Mammary epithelial cell (primary cell): ENCODE measurements at regions of chr7 and their contacts with region 1.

Region 1: GRCh38 chr7:37031571-37032257 is 307.4 kb upstream of the AOAH start:
- DNase-seq: peak; percentile 97
- H3K4me3 ChIP-seq: no peak overlapping the region
- H3K27ac ChIP-seq: peak overlapping the region; percentile 66
- H3K4me1 ChIP-seq: peaks cover 23% of the 10 kb centered on the region
- H3K27me3 ChIP-seq: no peaks in the 10 kb centered on the region
- CTCF ChIP-seq: no peak

Region 2: GRCh38 chr7:37097276-37097675 is 65.6 kb after region 1 on chr7:
- CTCF ChIA-PET with region 1: no interaction called
- dilution Hi-C with region 1: no loop called
- in situ Hi-C with region 1: no loop called
- intact Hi-C with region 1: loop called (anchors 5 kb)
- DNase-seq: no peak
- H3K4me3 ChIP-seq: no peak overlapping the region
- H3K27ac ChIP-seq: no peak overlapping the region
- H3K4me1 ChIP-seq: no peaks in the 10 kb centered on the region
- H3K27me3 ChIP-seq: no peaks in the 10 kb centered on the region
- CTCF ChIP-seq: no peak

Region 3: DNA sequence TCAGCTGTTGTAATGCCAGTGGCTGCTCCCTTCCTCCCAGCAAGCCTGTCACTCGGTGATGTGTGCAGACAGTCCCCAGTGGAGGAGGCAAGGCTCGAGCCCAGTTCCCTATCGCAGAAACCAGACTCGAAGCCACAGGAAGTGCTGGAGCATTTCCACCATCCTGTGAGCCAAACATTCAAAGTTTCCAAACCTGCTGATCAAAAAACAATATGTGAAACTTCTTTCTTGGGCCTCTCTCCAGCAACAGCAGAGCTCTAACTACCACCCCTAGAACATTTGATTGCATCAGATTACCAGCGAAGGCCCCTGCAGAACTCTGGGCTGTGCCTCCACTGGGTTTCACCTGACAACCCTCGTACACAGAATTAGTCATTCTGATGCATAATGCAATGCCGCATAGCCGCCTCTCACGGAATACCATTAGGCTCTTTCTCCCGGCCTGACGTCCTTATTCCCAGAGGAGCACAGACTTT is 323.0 kb after region 1 on chr7:
- CTCF ChIA-PET with region 1: no interaction called
- dilution Hi-C with region 1: no loop called
- in situ Hi-C with region 1: no loop called
- intact Hi-C with region 1: no loop called
- DNase-seq: peak; percentile 76
- H3K4me3 ChIP-seq: no peak overlapping the region
- H3K27ac ChIP-seq: no peak overlapping the region
- H3K4me1 ChIP-seq: no peaks in the 10 kb centered on the region
- H3K27me3 ChIP-seq: no peaks in the 10 kb centered on the region
- CTCF ChIP-seq: no peak